A673 (cell line): ENCODE measurements at regions of chr12 and their contacts with region 1.

Region 1: GRCh38 chr12:12916135-12916944 is 25.0 kb downstream of the GPRC5A start:
- DNase-seq: peak; percentile 90
- H3K4me3 ChIP-seq: no peak overlapping the region
- H3K27ac ChIP-seq: no peak overlapping the region
- H3K4me1 ChIP-seq: peaks cover 7% of the 10 kb centered on the region
- H3K27me3 ChIP-seq: no peaks in the 10 kb centered on the region
- CTCF ChIP-seq: peak; percentile 97

Region 2: GRCh38 chr12:12983420-12984035 is 67.2 kb after region 1 on chr12:
- CTCF ChIA-PET with region 1: no interaction called
- POLR2A ChIA-PET with region 1: no interaction called
- intact Hi-C with region 1: loop called (anchors 5 kb)
- DNase-seq: peak; percentile 65
- H3K4me3 ChIP-seq: no peak overlapping the region
- H3K27ac ChIP-seq: no peak overlapping the region
- H3K4me1 ChIP-seq: peaks cover 11% of the 10 kb centered on the region
- H3K27me3 ChIP-seq: no peaks in the 10 kb centered on the region
- CTCF ChIP-seq: peak; percentile 71

Region 3: GRCh38 chr12:13233830-13234641 is 317.7 kb after region 1 on chr12:
- CTCF ChIA-PET with region 1: no interaction called
- POLR2A ChIA-PET with region 1: no interaction called
- intact Hi-C with region 1: loop called (anchors 1 kb)
- DNase-seq: peak; percentile 75
- H3K4me3 ChIP-seq: no peak overlapping the region
- H3K27ac ChIP-seq: no peak overlapping the region
- H3K4me1 ChIP-seq: no peaks in the 10 kb centered on the region
- H3K27me3 ChIP-seq: no peaks in the 10 kb centered on the region
- CTCF ChIP-seq: peak; percentile 81